ENCODE measurements at regions of chr9 and their contacts with region 1.

Region 1: DNA sequence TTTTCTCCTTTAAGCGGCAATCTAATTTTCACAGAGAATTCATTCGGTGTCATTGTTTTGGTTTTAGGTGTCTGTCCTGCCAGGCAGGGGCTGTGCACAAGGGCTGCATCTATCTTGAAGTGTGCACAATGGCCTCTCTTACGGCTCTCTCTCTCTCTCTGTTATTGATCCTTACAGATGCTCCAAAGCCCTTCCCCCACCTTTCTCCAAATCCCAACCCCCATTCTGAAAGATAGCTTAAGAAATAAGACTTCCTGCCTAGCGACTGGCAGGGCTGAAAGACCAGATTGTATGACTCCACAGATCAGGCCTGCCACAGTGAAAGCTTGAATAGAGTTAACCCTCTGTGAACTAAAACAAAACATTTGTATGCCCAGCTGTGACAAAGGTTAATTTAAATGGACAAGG is 86.5 kb upstream of the NR5A1 start:
- DNase-seq: peak; percentile 59 to 71
- H3K4me3 ChIP-seq: peak overlapping the region; percentile 12 to 55 (median 28); a peak in 6 of 8 replicates
- H3K27ac ChIP-seq: peak overlapping the region; percentile 69
- H3K4me1 ChIP-seq: peaks cover 7 to 39% (median 29%) of the 10 kb centered on the region in 4 experiments
- H3K27me3 ChIP-seq: no peaks in the 10 kb centered on the region
- CTCF ChIP-seq: no peak
- EP300 ChIP-seq: peak in 1 of 2 experiments; percentile 91; a peak in 2 of 3 replicates
- POLR2A ChIP-seq: peak in 1 of 2 experiments; percentile 18; a peak in 2 of 3 replicates
- RAD21 ChIP-seq: peak in 1 of 2 experiments; percentile 20; a peak in 1 of 4 replicates

Region 2: GRCh38 chr9:124291801-124292396 is 301.8 kb before region 1 on chr9:
- CTCF ChIA-PET with region 1: no interaction called
- POLR2A ChIA-PET with region 1: no interaction called
- DNase-seq: no peak
- H3K4me3 ChIP-seq: no peak overlapping the region
- H3K27ac ChIP-seq: no peak overlapping the region
- H3K4me1 ChIP-seq: peaks cover 0 to 14% (median 3%) of the 10 kb centered on the region in 4 experiments; a peak in 5 of 7 replicates
- H3K27me3 ChIP-seq: no peaks in the 10 kb centered on the region
- CTCF ChIP-seq: no peak
- EP300 ChIP-seq: no peak
- POLR2A ChIP-seq: no peak
- RAD21 ChIP-seq: no peak

Region 3: GRCh38 chr9:124357721-124358361 is 235.8 kb before region 1 on chr9:
- CTCF ChIA-PET with region 1: no interaction called
- POLR2A ChIA-PET with region 1: no interaction called
- DNase-seq: no peak
- H3K4me3 ChIP-seq: no peak overlapping the region
- H3K27ac ChIP-seq: no peak overlapping the region
- H3K4me1 ChIP-seq: no peaks in the 10 kb centered on the region
- H3K27me3 ChIP-seq: no peaks in the 10 kb centered on the region
- CTCF ChIP-seq: peak; percentile 38 to 54 (median 53)
- EP300 ChIP-seq: no peak
- POLR2A ChIP-seq: no peak
- RAD21 ChIP-seq: peak; percentile 49 to 65

Region 4: GRCh38 chr9:124605258-124605657 is 11.6 kb after region 1 on chr9:
- CTCF ChIA-PET with region 1: interaction called, 19 read pairs
- POLR2A ChIA-PET with region 1: interaction called, 4 read pairs
- DNase-seq: no peak
- H3K4me3 ChIP-seq: no peak overlapping the region
- H3K27ac ChIP-seq: no peak overlapping the region
- H3K4me1 ChIP-seq: no peaks in the 10 kb centered on the region
- H3K27me3 ChIP-seq: no peaks in the 10 kb centered on the region
- CTCF ChIP-seq: no peak
- EP300 ChIP-seq: no peak
- POLR2A ChIP-seq: no peak
- RAD21 ChIP-seq: no peak

Measured in H1 (cell line).